ENCODE measurements at regions of chr19 and their contacts with region 1.

Region 1: DNA sequence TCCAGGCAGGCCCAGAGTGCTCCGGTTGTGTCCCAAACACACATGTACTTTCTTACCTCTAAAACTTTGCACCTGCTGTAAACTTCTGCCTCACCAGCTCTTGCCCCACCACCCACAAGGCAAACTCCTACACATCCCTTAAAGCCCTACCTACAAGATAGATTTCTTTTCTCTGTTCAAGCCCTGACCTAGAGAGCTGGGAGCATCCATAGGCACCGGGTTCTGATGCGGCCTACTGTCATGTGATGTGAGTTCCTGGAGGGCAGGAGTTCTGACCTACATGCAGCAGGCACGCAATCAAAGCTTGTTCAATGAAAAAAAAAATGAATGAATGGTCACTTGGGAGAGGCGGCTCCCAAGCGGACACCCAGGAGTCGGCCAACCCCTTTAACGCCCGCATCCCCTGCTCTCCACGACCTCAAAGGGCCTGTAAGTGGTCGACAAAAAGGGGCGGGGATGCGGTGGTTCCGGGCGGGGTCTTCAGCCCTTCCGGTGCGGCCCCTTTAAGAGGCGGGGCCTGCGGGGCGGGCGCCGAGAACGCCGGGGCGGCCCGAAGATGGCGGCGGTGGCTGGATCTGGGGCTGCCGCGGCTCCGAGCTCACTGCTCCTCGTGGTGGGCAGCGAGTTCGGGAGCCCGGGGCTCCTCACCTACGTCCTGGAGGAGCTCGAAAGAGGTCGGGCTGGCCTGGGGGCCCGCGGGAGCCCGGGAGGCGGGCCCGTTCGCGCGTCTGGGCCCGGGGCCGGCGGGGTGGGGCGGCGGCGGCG is at the start of gene MAP1S:
- DNase-seq: peak; percentile 70 to 72 (median 72)
- ATAC-seq: peak; percentile 59 to 80 (median 64)
- H3K4me3 ChIP-seq: peak within 1 kb of the TSS; percentile 78 to 89 (median 86)
- H3K27ac ChIP-seq: peak within 1 kb of the TSS; percentile 15 to 66 (median 62)
- H3K4me1 ChIP-seq: peaks cover 0 to 18% (median 5%) of the 10 kb centered on the region in 4 donors
- H3K27me3 ChIP-seq: no peaks in the 10 kb centered on the region
- CTCF ChIP-seq: no peak
- POLR2A ChIP-seq: peak; percentile 59
- total RNA-seq, gene MAP1S: 11.1 to 31.3 (median 14.9) TPM

Region 2: DNA sequence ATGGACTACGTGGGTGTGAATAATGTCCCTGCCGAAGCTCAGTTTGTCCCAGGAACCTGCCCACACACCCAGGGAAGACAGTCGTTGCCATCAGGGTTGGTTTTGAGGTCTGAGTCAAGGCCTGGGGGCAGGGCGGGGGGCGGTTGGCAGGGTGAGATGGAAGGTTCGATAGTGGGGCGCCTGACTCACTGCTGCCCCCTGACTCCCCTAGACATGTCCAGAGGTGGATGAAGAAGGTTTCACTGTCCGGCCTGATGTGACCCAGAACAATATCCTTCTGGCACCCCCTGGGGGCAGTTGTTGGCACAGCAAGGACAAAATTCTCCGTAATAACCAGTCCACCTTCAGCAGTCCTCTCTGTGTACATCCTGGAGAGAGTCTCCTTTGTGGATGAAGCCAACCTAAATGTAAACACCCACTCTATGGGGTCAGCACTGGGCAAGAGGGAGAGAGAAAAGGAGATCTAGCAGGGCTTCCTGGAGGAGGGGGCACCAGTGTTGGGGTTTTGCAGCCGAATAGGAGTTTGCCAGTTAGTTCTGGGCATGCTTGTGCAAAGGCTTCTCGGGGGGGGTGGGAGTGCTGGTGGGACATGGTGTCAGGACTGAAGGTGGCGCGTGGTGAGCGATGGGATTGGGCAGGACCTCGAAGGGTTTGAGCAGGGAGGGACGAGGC is 56.3 kb after region 1 on chr19:
- intact Hi-C with region 1: loop called in 1 of 2 experiments (anchors 10 kb)
- DNase-seq: no peak
- ATAC-seq: peak; percentile 25 to 57 (median 30)
- H3K4me3 ChIP-seq: no peak overlapping the region
- H3K27ac ChIP-seq: no peak overlapping the region
- H3K4me1 ChIP-seq: no peaks in the 10 kb centered on the region
- H3K27me3 ChIP-seq: no peaks in the 10 kb centered on the region
- CTCF ChIP-seq: peak; percentile 30 to 48 (median 46)
- POLR2A ChIP-seq: no peak